Heart right ventricle (tissue), 16 donors: ENCODE measurements at regions of chr9 and their contacts with region 1.

Region 1: DNA sequence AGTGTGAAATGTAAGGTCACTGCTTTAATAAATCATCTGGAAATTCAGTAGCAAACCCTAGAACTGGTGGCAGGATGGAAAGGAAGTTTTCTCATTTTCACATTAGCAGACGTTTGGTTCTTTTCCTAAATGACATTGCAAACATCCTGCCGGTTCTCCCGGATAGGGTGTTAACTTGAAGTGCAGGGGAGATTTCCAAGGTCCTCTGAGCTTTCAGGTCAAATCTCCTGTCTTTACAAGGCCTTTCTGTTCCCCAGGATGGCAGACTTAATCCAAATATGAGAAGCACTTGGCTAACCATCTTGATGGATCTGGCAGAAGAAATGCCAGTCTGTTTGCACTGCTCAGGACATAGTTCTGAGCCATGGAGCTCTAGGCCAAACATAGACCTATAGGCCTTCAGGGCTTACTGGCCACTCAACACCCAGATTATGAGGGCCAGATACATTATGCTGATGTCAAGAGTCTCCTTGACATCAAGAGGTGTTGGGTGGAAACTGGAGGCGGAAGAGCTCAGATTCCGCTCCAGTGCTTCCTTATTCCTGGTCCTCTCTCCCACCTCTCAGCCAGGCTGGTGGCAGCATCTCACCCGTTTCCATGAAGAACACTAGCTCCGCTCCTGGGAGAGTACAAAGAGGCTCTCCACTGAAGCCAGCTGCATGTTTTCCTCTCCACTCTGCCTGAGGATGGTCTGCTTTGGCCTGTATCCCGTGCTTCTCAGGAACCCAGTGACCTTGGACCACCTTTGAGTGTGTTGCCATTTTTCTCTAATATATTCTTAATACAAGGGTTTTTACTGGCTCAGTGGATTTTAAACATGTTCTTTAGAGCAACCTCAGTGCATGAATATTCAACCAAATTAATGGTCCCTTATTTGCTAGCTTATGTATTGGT is 61.0 kb downstream of the RALGPS1 start:
- DNase-seq: no peak
- ATAC-seq: peak in 3 of 8 donors; percentile 20 to 60 (median 53)
- H3K4me3 ChIP-seq: no peak overlapping the region
- H3K27ac ChIP-seq: peak overlapping the region in 9 of 10 donors; percentile 7 to 72 (median 35)
- H3K4me1 ChIP-seq: peaks cover 0 to 30% (median 10%) of the 10 kb centered on the region in 9 donors
- H3K27me3 ChIP-seq: peaks cover 0 to 11% (median 0%) of the 10 kb centered on the region in 7 donors
- CTCF ChIP-seq: no peak

Region 2: DNA sequence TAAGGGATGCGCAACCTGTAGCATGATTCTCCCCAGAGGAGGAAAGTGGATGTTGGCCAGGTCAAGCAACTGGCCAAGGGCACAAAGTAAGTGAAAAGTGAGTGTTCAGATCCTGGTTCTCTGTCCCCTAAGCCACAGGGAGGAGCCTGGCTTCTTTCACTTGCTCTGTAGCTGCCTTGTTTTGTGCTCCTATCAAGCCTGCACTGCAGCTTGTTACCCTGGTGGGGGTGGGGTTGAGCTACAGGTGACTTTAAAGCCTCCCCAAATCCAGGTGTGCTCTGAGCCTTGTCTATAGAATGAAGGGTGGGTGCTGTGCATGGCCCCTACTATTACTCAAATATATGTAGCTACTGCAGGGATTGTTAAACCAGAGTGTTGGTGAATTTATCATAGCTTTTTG is 28.0 kb before region 1 on chr9:
- intact Hi-C with region 1: no loop called
- DNase-seq: no peak
- ATAC-seq: peak in 3 of 8 donors; percentile 39 to 60 (median 56)
- H3K4me3 ChIP-seq: no peak overlapping the region
- H3K27ac ChIP-seq: no peak overlapping the region
- H3K4me1 ChIP-seq: peaks cover 0 to 36% (median 7%) of the 10 kb centered on the region in 9 donors
- H3K27me3 ChIP-seq: no peaks in the 10 kb centered on the region
- CTCF ChIP-seq: peak in 5 of 9 donors; percentile 9 to 36 (median 26)

Region 3: GRCh38 chr9:126989847-126990842 is 14.6 kb after region 1 on chr9:
- intact Hi-C with region 1: no loop called
- DNase-seq: peak; percentile 60 to 75
- ATAC-seq: peak; percentile 32 to 79 (median 66)
- H3K4me3 ChIP-seq: no peak overlapping the region
- H3K27ac ChIP-seq: peak overlapping the region in 9 of 10 donors; percentile 37 to 81 (median 61)
- H3K4me1 ChIP-seq: peaks cover 3 to 47% (median 40%) of the 10 kb centered on the region in 9 donors
- H3K27me3 ChIP-seq: peaks cover 0 to 58% (median 0%) of the 10 kb centered on the region in 7 donors
- CTCF ChIP-seq: no peak

Region 4: GRCh38 chr9:127035951-127036350 is 60.4 kb after region 1 on chr9:
- intact Hi-C with region 1: loop called in 2 of 10 experiments (anchors 5 to 10 kb)
- DNase-seq: peak; percentile 59 to 63
- ATAC-seq: peak; percentile 76 to 90 (median 84)
- H3K4me3 ChIP-seq: no peak overlapping the region
- H3K27ac ChIP-seq: peak overlapping the region in 9 of 10 donors; percentile 11 to 84 (median 69)
- H3K4me1 ChIP-seq: peaks cover 0 to 46% (median 30%) of the 10 kb centered on the region in 9 donors
- H3K27me3 ChIP-seq: no peaks in the 10 kb centered on the region
- CTCF ChIP-seq: no peak